CD4-positive, alpha-beta memory T cell (primary cell): ENCODE measurements at regions of chr19 and their contacts with region 1.

Region 1: DNA sequence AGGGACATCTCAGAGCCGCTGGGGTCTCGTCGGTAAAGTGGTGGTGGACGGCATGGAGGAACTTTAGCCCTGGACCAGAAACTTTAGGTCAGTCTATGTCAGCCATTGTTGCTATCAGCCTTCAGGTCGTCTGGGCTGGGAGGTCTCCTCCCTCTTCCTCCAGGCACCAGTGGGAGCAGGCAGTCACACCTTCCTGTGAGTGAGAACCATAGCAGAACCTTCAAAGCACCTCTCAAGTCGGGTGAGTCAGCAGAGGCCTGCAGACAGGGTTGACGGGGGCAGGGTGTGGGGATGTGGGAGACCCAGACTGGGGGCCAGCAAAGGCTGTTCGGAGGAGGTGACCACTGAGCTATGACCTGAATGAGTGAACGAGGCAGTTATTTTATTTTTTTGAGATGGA is 15.4 kb upstream of the SBNO2 start:
- DNase-seq: peak in 2 of 5 donors; percentile 36 to 68
- H3K4me3 ChIP-seq: no peak overlapping the region
- H3K4me3 Mint-ChIP-seq: peak overlapping the region in 6 of 8 donors; percentile 39 to 73 (median 50)
- H3K27ac ChIP-seq: no peak overlapping the region
- H3K27ac Mint-ChIP-seq: peak overlapping the region in 6 of 7 donors; percentile 30 to 92 (median 79)
- H3K4me1 ChIP-seq: peaks cover 39% of the 10 kb centered on the region
- H3K4me1 Mint-ChIP-seq: peaks cover 13 to 30% (median 18%) of the 10 kb centered on the region in 4 donors
- H3K27me3 ChIP-seq: no peaks in the 10 kb centered on the region
- H3K27me3 Mint-ChIP-seq: no peaks in the 10 kb centered on the region

Region 2: DNA sequence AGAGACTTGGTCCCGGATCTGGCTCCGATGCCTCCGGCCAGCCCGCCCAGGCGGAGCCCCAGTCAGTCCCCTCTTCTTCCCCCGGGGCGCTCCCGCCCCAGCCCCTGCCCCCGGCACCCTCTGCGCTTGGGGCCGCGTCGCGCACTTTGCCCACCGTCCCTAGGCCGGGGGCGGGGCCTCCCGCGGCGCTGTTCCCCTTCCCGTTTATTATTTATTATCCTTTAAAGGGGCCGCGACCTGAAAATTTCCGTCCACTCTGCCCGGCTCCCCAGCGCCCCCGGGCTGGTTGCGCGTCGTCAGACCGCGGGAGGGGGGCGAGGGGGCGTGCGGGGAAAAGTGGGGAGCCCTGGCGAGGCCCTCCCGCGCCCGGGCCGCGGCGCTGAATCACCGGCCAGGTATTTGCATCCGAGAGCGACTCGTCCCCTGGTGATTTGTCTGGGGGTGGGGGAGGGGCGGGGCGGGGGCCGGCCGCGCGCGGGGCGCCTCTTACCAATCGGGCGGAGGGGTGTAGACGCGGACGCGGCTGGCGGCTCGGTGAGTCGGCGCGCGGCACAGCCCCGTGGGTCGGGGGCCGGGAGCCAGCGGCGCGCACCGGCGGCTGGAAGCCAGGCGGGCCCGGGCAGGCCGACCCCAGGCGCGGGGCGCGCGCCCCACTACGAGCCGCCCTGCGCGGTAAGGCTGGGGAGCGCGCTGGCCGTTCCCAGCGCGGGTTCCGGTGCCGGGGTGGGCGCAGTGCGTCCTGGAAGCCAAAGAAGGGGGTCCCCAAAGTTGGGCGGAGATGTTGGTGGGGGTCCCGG is 263.7 kb before region 1 on chr19 and contains the start of gene ARID3A:
- CTCF ChIA-PET with region 1: interaction called, 8 read pairs
- POLR2A ChIA-PET with region 1: no interaction called
- intact Hi-C with region 1: loop called (anchors 5 kb)
- DNase-seq: peak; percentile 73 to 85 (median 78)
- H3K4me3 ChIP-seq: peak within 1 kb of the TSS; percentile 47 to 91
- H3K4me3 Mint-ChIP-seq: peak within 1 kb of the TSS; percentile 80 to 88 (median 84)
- H3K27ac ChIP-seq: peak within 1 kb of the TSS; percentile 64
- H3K27ac Mint-ChIP-seq: peak within 1 kb of the TSS in 6 of 7 donors; percentile 37 to 88 (median 72)
- H3K4me1 ChIP-seq: peaks cover 22% of the 10 kb centered on the region
- H3K4me1 Mint-ChIP-seq: peaks cover 8 to 21% (median 13%) of the 10 kb centered on the region in 4 donors
- H3K27me3 ChIP-seq: no peaks in the 10 kb centered on the region
- H3K27me3 Mint-ChIP-seq: peaks cover 0 to under 1% of the 10 kb centered on the region in 2 donors
- total RNA-seq, gene ARID3A: 9.2 to 9.6 TPM

Region 3: GRCh38 chr19:1039646-1040475 is 149.6 kb before region 1 on chr19 and contains the start of gene ABCA7:
- CTCF ChIA-PET with region 1: interaction called, 3 read pairs
- POLR2A ChIA-PET with region 1: interaction called, 10 read pairs
- intact Hi-C with region 1: no loop called
- DNase-seq: peak; percentile 98 to 99 (median 98)
- H3K4me3 ChIP-seq: peak within 1 kb of the TSS; percentile 56 to 100
- H3K4me3 Mint-ChIP-seq: peak within 1 kb of the TSS; percentile 95 to 100 (median 97)
- H3K27ac ChIP-seq: peak within 1 kb of the TSS; percentile 75
- H3K27ac Mint-ChIP-seq: peak within 1 kb of the TSS; percentile 91 to 97 (median 95)
- H3K4me1 ChIP-seq: peaks cover 54% of the 10 kb centered on the region
- H3K4me1 Mint-ChIP-seq: peaks cover 27 to 69% (median 48%) of the 10 kb centered on the region in 4 donors
- H3K27me3 ChIP-seq: no peaks in the 10 kb centered on the region
- H3K27me3 Mint-ChIP-seq: no peaks in the 10 kb centered on the region
- total RNA-seq, gene ABCA7: 313 to 319 TPM

Region 4: DNA sequence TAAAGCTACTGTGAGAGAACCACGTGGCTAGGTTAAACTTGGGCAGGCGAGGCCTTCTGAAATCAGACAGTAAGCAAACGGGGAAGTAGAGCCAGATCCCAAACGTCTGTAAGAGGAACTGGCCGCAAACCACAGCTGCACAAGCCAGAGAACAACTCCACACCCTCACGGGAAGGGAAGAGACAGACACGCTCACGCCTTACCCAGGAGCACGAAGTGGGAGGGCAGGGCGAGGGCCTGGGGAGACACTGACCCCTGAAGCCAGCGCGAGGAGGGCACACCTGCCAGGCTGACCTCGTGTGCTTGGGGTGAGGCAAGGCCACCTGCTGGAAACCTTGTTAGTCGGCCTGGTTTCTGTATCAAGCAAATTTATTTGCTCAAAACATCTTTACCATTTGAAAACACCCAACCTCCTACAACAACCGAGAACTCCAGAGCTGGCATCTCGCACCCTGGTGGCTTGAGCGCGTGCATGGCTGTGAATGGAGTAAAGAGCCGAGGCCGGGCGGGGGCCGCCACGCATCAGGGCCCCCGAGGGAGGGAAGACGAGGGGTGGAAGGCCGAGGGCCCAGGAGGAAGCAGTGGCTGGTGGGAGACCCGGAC is 101.5 kb before region 1 on chr19:
- CTCF ChIA-PET with region 1: interaction called, 6 read pairs
- POLR2A ChIA-PET with region 1: interaction called, 16 read pairs
- intact Hi-C with region 1: no loop called
- DNase-seq: peak; percentile 59 to 78 (median 65)
- H3K4me3 ChIP-seq: no peak overlapping the region
- H3K4me3 Mint-ChIP-seq: peak overlapping the region in 5 of 8 donors; percentile 25 to 82 (median 69)
- H3K27ac ChIP-seq: peak overlapping the region; percentile 74
- H3K27ac Mint-ChIP-seq: peak overlapping the region; percentile 72 to 97 (median 93)
- H3K4me1 ChIP-seq: peaks cover 64% of the 10 kb centered on the region
- H3K4me1 Mint-ChIP-seq: peaks cover 14 to 67% (median 32%) of the 10 kb centered on the region in 4 donors
- H3K27me3 ChIP-seq: no peaks in the 10 kb centered on the region
- H3K27me3 Mint-ChIP-seq: no peaks in the 10 kb centered on the region

Region 5: GRCh38 chr19:1103708-1104310 is 85.6 kb before region 1 on chr19 and contains the start of gene GPX4:
- CTCF ChIA-PET with region 1: no interaction called
- POLR2A ChIA-PET with region 1: interaction called, 10 read pairs
- intact Hi-C with region 1: loop called (anchors 5 kb)
- DNase-seq: peak; percentile 94 to 98 (median 97)
- H3K4me3 ChIP-seq: peak within 1 kb of the TSS; percentile 47 to 76
- H3K4me3 Mint-ChIP-seq: peak within 1 kb of the TSS; percentile 73 to 86 (median 77)
- H3K27ac ChIP-seq: peak within 1 kb of the TSS; percentile 96
- H3K27ac Mint-ChIP-seq: peak within 1 kb of the TSS; percentile 92 to 97 (median 96)
- H3K4me1 ChIP-seq: peaks cover 43% of the 10 kb centered on the region
- H3K4me1 Mint-ChIP-seq: peaks cover 14 to 51% (median 33%) of the 10 kb centered on the region in 4 donors
- H3K27me3 ChIP-seq: no peaks in the 10 kb centered on the region
- H3K27me3 Mint-ChIP-seq: no peaks in the 10 kb centered on the region
- total RNA-seq, gene GPX4: 210 to 220 TPM

Region 6: GRCh38 chr19:1131738-1132551 is 57.5 kb before region 1 on chr19:
- CTCF ChIA-PET with region 1: interaction called, 10 read pairs
- POLR2A ChIA-PET with region 1: interaction called, 42 read pairs
- intact Hi-C with region 1: loop called (anchors 5 kb)
- DNase-seq: peak; percentile 82 to 92 (median 83)
- H3K4me3 ChIP-seq: peak overlapping the region; percentile 61 to 89
- H3K4me3 Mint-ChIP-seq: peak overlapping the region; percentile 85 to 92 (median 88)
- H3K27ac ChIP-seq: peak overlapping the region; percentile 90
- H3K27ac Mint-ChIP-seq: peak overlapping the region; percentile 91 to 94 (median 94)
- H3K4me1 ChIP-seq: peaks cover 60% of the 10 kb centered on the region
- H3K4me1 Mint-ChIP-seq: peaks cover 7 to 35% (median 23%) of the 10 kb centered on the region in 4 donors
- H3K27me3 ChIP-seq: no peaks in the 10 kb centered on the region
- H3K27me3 Mint-ChIP-seq: no peaks in the 10 kb centered on the region